K562 (cell line): ENCODE measurements at regions of chr13 and their contacts with region 1.

Region 1: GRCh38 chr13:28313579-28313978 is 175.2 kb downstream of the PAN3 start:
- DNase-seq: peak in 1 of 4 experiments; percentile 31
- ATAC-seq: peak; percentile 62; the same call in 2 of the 3 replicates
- H3K4me3 ChIP-seq: no peak overlapping the region
- H3K27ac ChIP-seq: no peak overlapping the region
- H3K4me1 ChIP-seq: no peaks in the 10 kb centered on the region
- H3K27me3 ChIP-seq: peaks cover 0 to under 1% of the 10 kb centered on the region in 2 experiments; a peak in 1 of 5 replicates
- CTCF ChIP-seq: peak in 2 of 3 experiments; percentile 11 to 37; a peak in 2 of 6 replicates
- EP300 ChIP-seq: no peak
- POLR2A ChIP-seq: no peak
- RAD21 ChIP-seq: 0 out of 4 replicates have a peak, but pooled peaks of 1 of the 2 experiments have one; percentile 24

Region 2: GRCh38 chr13:28058866-28059624 is 254.5 kb before region 1 on chr13:
- CTCF ChIA-PET with region 1: no interaction called
- POLR2A ChIA-PET with region 1: no interaction called
- in situ Hi-C with region 1: no loop called
- intact Hi-C with region 1: loop called (anchors 10 kb)
- DNase-seq: peak; percentile 43 to 54 (median 46)
- ATAC-seq: peak; percentile 82
- H3K4me3 ChIP-seq: no peak overlapping the region
- H3K27ac ChIP-seq: no peak overlapping the region
- H3K4me1 ChIP-seq: no peaks in the 10 kb centered on the region
- H3K27me3 ChIP-seq: peaks cover 2 to 21% of the 10 kb centered on the region in 2 experiments; a peak in 4 of 5 replicates
- CTCF ChIP-seq: peak; percentile 52 to 60 (median 54); a peak in 5 of 6 replicates
- EP300 ChIP-seq: no peak
- POLR2A ChIP-seq: no peak
- RAD21 ChIP-seq: peak; percentile 32 to 71